ENCODE measurements at regions of chr11 and their contacts with region 1.

Region 1: GRCh38 chr11:72396041-72396440 is 38.3 kb downstream of the CLPB start:
- DNase-seq: no peak
- ATAC-seq: no peak
- H3K4me3 ChIP-seq: no peak overlapping the region
- H3K27ac ChIP-seq: no peak overlapping the region
- H3K4me1 ChIP-seq: peaks cover 66% of the 10 kb centered on the region
- H3K27me3 ChIP-seq: no peaks in the 10 kb centered on the region
- CTCF ChIP-seq: no peak
- EP300 ChIP-seq: no peak
- POLR2A ChIP-seq: no peak
- RAD21 ChIP-seq: no peak

Region 2: GRCh38 chr11:72406540-72407527 is 10.8 kb after region 1 on chr11:
- CTCF ChIA-PET with region 1: no interaction called
- POLR2A ChIA-PET with region 1: interaction called, 14 read pairs
- in situ Hi-C with region 1: no loop called
- intact Hi-C with region 1: no loop called
- DNase-seq: peak; percentile 43
- ATAC-seq: peak; percentile 47
- H3K4me3 ChIP-seq: no peak overlapping the region
- H3K27ac ChIP-seq: no peak overlapping the region
- H3K4me1 ChIP-seq: peaks cover 69% of the 10 kb centered on the region
- H3K27me3 ChIP-seq: no peaks in the 10 kb centered on the region
- CTCF ChIP-seq: no peak
- EP300 ChIP-seq: no peak
- POLR2A ChIP-seq: no peak
- RAD21 ChIP-seq: no peak

Region 3: DNA sequence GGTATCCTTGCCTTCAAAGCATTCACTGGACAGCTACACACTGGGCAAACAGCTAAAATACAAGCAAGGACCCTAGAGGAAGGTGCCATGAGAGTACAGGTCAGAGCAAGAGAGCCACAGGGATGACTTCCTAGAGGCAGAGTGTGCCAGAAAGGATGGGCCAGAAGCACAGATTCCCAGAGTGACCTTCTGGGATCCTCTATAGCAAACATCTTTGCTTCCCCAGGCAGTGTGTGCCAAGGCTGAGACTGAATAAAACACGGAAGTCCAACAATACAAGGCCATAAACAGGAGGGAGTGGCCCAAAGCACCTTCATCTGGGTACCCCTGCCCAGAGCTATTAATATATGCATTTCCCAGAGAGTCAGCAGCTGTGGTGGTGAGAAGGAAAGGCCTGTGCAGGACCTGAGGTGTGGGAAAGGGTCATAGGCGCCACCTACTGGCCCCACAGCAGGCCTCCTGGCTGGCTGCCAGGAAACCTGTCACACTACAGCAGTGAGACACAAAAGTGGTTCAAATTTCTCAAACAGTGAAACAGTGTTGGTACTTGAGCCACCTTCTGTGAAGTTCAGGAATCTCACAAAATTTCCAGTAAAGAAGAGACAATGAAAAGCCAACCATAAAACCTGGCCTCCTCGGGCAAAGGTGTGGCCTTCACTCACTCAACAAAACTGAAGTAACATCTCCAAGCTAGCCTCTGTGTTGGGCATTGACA is 18.0 kb after region 1 on chr11:
- CTCF ChIA-PET with region 1: interaction called, 3 read pairs
- POLR2A ChIA-PET with region 1: interaction called, 14 read pairs
- in situ Hi-C with region 1: no loop called
- intact Hi-C with region 1: loop called (anchors 1 kb)
- DNase-seq: peak; percentile 76
- ATAC-seq: peak; percentile 40
- H3K4me3 ChIP-seq: no peak overlapping the region
- H3K27ac ChIP-seq: peak overlapping the region; percentile 37
- H3K4me1 ChIP-seq: peaks cover 99% of the 10 kb centered on the region
- H3K27me3 ChIP-seq: no peaks in the 10 kb centered on the region
- CTCF ChIP-seq: peak; percentile 93
- EP300 ChIP-seq: peak in 1 of 2 experiments; percentile 40; a peak in 1 of 4 replicates
- POLR2A ChIP-seq: no peak
- RAD21 ChIP-seq: peak; percentile 91

Region 4: GRCh38 chr11:72421351-72421750 is 25.3 kb after region 1 on chr11:
- CTCF ChIA-PET with region 1: no interaction called
- POLR2A ChIA-PET with region 1: interaction called, 15 read pairs
- in situ Hi-C with region 1: no loop called
- intact Hi-C with region 1: loop called (anchors 1 kb)
- DNase-seq: no peak
- ATAC-seq: no peak
- H3K4me3 ChIP-seq: no peak overlapping the region
- H3K27ac ChIP-seq: peak overlapping the region; percentile 71
- H3K4me1 ChIP-seq: peaks cover 93% of the 10 kb centered on the region
- H3K27me3 ChIP-seq: no peaks in the 10 kb centered on the region
- CTCF ChIP-seq: no peak
- EP300 ChIP-seq: no peak
- POLR2A ChIP-seq: no peak
- RAD21 ChIP-seq: no peak

Measured in HepG2 (cell line).